Activated naive CD4-positive, alpha-beta T cell treated with anti-CD3 and anti-CD28 coated beads, Interleukin-2, amount 10 ng/mL, durations not matched to agents 7 days and 5 days (primary cell): ENCODE measurements at regions of chr20 and their contacts with region 1.

Region 1: GRCh38 chr20:431012-431904 is 23.2 kb downstream of the RBCK1 start:
- DNase-seq: peak; percentile 68
- H3K4me3 Mint-ChIP-seq: no peak overlapping the region
- H3K27ac Mint-ChIP-seq: peak overlapping the region; percentile 51
- H3K4me1 Mint-ChIP-seq: peaks cover 44% of the 10 kb centered on the region
- H3K27me3 Mint-ChIP-seq: no peaks in the 10 kb centered on the region

Region 2: GRCh38 chr20:362271-363254 is 68.7 kb before region 1 on chr20:
- CTCF ChIA-PET with region 1: interaction called, 10 read pairs
- DNase-seq: peak; percentile 65
- H3K4me3 Mint-ChIP-seq: no peak overlapping the region
- H3K27ac Mint-ChIP-seq: peak overlapping the region; percentile 66
- H3K4me1 Mint-ChIP-seq: peaks cover 44% of the 10 kb centered on the region
- H3K27me3 Mint-ChIP-seq: peaks cover 9% of the 10 kb centered on the region

Region 3: DNA sequence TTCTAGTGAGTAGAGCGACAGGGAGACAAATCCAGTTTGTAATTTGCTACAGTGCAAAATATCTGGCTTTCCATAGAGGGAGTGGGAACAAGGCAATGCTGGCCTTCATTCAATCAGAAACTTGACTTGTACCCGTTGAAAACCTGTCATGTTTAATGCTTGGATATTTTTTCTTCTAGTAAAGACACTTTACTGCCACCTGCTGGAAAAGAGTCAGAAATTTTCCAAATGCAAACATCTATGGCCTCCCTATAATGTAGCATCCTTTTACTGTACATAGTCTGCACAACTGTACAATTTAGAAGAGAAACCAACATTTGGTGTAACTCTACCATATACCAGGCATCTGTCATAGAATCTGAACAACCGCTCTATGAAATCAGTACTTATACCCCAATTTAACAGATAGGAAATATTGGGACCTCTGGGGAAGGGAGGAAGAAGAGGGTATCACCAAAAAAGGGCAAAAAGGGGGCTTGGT is 47.7 kb after region 1 on chr20:
- CTCF ChIA-PET with region 1: interaction called, 10 read pairs
- DNase-seq: peak; percentile 45
- H3K4me3 Mint-ChIP-seq: no peak overlapping the region
- H3K27ac Mint-ChIP-seq: peak overlapping the region; percentile 79
- H3K4me1 Mint-ChIP-seq: peaks cover 51% of the 10 kb centered on the region
- H3K27me3 Mint-ChIP-seq: no peaks in the 10 kb centered on the region